B cell (primary cell): ENCODE measurements at regions of chr22 and their contacts with region 1.

Region 1: DNA sequence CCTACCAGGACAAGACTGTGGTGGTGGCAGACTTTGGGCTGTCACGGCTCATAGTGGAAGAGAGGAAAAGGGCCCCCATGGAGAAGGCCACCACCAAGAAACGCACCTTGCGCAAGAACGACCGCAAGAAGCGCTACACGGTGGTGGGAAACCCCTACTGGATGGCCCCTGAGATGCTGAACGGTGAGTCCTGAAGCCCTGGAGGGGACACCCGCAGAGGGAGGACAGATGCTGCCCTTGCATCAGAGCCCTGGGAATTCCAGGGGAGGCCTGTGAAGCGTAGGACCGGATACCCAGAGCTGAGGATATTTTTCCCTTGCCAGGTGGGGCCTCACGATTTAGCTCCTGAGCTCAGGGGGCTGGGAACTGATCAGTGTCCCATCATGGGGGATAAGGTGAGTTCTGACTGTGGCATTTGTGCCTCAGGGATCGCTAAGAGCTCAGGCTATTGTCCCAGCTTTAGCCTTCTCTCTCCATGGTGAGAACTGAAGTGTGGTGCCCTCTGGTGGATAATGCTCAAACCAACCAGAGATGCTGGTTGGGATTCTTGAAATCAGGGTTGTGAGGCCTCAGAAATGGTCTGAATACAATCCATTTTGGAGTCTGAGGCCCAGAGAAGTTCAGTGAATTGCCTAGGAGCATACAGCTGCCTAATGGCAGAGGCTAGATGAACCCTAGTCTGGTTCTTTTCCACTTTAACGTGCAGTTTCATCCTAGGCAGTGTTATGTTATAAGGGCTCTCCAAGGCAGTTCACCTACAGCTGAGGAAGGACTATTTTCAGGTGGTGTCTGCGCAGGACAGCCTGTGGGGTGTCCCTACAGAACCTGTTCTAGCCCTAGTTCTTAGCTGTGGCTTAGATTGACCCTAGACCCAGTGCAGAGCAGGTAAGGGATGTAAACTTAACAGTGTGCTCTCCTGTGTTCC is 19.5 kb downstream of the PIK3IP1 start:
- DNase-seq: peak; percentile 67
- ATAC-seq: peak; percentile 49
- H3K4me3 ChIP-seq: no peak overlapping the region
- H3K4me3 Mint-ChIP-seq: no peak overlapping the region
- H3K27ac ChIP-seq: no peak overlapping the region
- H3K27ac Mint-ChIP-seq: no peak overlapping the region
- H3K4me1 ChIP-seq: peaks cover 0 to 3% of the 10 kb centered on the region in 2 donors
- H3K4me1 Mint-ChIP-seq: no peaks in the 10 kb centered on the region
- H3K27me3 ChIP-seq: no peaks in the 10 kb centered on the region
- H3K27me3 Mint-ChIP-seq: no peaks in the 10 kb centered on the region
- CTCF ChIP-seq: peak; percentile 72

Region 2: GRCh38 chr22:31089160-31090100 is 183.4 kb before region 1 on chr22:
- CTCF ChIA-PET with region 1: interaction called, 7 read pairs
- POLR2A ChIA-PET with region 1: no interaction called
- intact Hi-C with region 1: loop called (anchors 1 kb)
- DNase-seq: peak; percentile 63
- ATAC-seq: peak; percentile 35
- H3K4me3 ChIP-seq: no peak overlapping the region
- H3K4me3 Mint-ChIP-seq: peak overlapping the region; percentile 60
- H3K27ac ChIP-seq: peak overlapping the region; percentile 29 to 36
- H3K27ac Mint-ChIP-seq: peak overlapping the region; percentile 77
- H3K4me1 ChIP-seq: peaks cover 14 to 39% of the 10 kb centered on the region in 2 donors
- H3K4me1 Mint-ChIP-seq: peaks cover 16% of the 10 kb centered on the region
- H3K27me3 ChIP-seq: no peaks in the 10 kb centered on the region
- H3K27me3 Mint-ChIP-seq: no peaks in the 10 kb centered on the region
- CTCF ChIP-seq: peak; percentile 67

Region 3: GRCh38 chr22:31223786-31224191 is 49.0 kb before region 1 on chr22:
- CTCF ChIA-PET with region 1: interaction called, 10 read pairs
- POLR2A ChIA-PET with region 1: no interaction called
- intact Hi-C with region 1: no loop called
- DNase-seq: no peak
- ATAC-seq: no peak
- H3K4me3 ChIP-seq: no peak overlapping the region
- H3K4me3 Mint-ChIP-seq: no peak overlapping the region
- H3K27ac ChIP-seq: no peak overlapping the region
- H3K27ac Mint-ChIP-seq: no peak overlapping the region
- H3K4me1 ChIP-seq: peaks cover 13 to 34% of the 10 kb centered on the region in 2 donors
- H3K4me1 Mint-ChIP-seq: peaks cover 31% of the 10 kb centered on the region
- H3K27me3 ChIP-seq: no peaks in the 10 kb centered on the region
- H3K27me3 Mint-ChIP-seq: no peaks in the 10 kb centered on the region
- CTCF ChIP-seq: no peak

Region 4: GRCh38 chr22:31253949-31254348 is 18.8 kb before region 1 on chr22:
- CTCF ChIA-PET with region 1: interaction called, 22 read pairs
- POLR2A ChIA-PET with region 1: no interaction called
- intact Hi-C with region 1: no loop called
- DNase-seq: no peak
- ATAC-seq: no peak
- H3K4me3 ChIP-seq: no peak overlapping the region
- H3K4me3 Mint-ChIP-seq: no peak overlapping the region
- H3K27ac ChIP-seq: no peak overlapping the region
- H3K27ac Mint-ChIP-seq: no peak overlapping the region
- H3K4me1 ChIP-seq: peaks cover 0 to 9% of the 10 kb centered on the region in 2 donors
- H3K4me1 Mint-ChIP-seq: peaks cover 15% of the 10 kb centered on the region
- H3K27me3 ChIP-seq: no peaks in the 10 kb centered on the region
- H3K27me3 Mint-ChIP-seq: no peaks in the 10 kb centered on the region
- CTCF ChIP-seq: no peak

Region 5: DNA sequence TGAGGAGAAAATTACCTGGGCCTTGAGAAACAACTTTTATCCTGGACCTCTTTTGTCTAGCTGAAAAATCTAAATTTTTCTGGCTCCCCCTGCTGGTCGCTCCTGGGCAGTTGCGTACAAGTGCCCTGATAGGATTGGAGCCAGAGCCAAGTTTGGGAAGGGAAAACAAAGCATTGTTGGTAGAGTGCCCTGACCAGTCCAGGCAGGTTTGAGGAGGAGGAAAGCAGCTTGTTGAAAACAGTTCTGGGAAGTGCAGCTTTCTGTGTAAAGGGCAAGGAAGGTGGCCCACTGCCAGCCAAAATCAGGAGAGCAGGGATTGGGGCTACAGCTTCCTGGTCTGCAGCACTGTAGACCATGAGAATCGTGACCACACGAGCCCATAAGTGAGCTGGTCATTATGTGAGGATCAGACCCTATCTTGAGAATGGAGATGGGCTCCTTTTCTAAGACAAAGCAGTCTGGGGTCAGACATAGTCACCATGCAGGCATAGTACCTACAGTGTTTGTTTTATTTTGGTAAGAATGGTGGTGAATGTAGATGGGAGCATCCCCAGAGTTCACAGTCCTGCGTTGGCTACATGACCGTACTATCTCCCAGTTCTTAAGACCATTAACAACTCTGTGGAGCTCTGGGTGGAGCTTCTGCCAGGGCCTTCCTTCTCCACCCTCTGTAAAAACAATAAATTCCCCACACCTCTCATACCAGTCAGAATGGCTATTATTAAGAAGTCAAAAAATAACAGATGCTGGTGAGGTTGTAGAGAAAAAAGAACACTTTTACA is 40.8 kb after region 1 on chr22:
- CTCF ChIA-PET with region 1: interaction called, 41 read pairs
- POLR2A ChIA-PET with region 1: interaction called, 3 read pairs
- intact Hi-C with region 1: no loop called
- DNase-seq: peak; percentile 68
- ATAC-seq: peak; percentile 64
- H3K4me3 ChIP-seq: no peak overlapping the region
- H3K4me3 Mint-ChIP-seq: no peak overlapping the region
- H3K27ac ChIP-seq: no peak overlapping the region
- H3K27ac Mint-ChIP-seq: no peak overlapping the region
- H3K4me1 ChIP-seq: peaks cover 2 to 7% of the 10 kb centered on the region in 2 donors
- H3K4me1 Mint-ChIP-seq: peaks cover 10% of the 10 kb centered on the region
- H3K27me3 ChIP-seq: no peaks in the 10 kb centered on the region
- H3K27me3 Mint-ChIP-seq: no peaks in the 10 kb centered on the region
- CTCF ChIP-seq: peak; percentile 94

Region 6: DNA sequence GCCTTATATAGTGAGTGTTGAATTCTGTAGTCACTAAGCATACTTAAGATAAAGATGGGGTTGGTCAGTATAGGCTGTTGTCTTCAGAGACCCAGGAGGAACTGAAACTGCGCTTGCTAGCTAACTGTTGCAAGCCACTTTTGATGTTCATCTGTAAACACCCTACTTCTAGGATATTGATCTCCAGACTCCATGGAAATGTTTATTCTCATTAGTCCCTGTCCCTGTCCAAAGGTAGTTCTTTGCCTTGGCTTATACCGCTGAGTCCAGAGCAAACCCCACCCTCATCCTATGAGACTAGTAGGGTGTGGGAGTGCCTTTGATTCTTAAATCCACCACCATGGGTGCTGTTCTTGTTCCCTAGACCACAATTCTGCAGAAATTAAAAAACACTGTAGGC is 517.5 kb after region 1 on chr22:
- CTCF ChIA-PET with region 1: no interaction called
- POLR2A ChIA-PET with region 1: interaction called, 14 read pairs
- intact Hi-C with region 1: no loop called
- DNase-seq: peak; percentile 67
- ATAC-seq: peak; percentile 82
- H3K4me3 ChIP-seq: peak overlapping the region in 1 of 5 experiments; percentile 11
- H3K4me3 Mint-ChIP-seq: peak overlapping the region; percentile 74
- H3K27ac ChIP-seq: peak overlapping the region; percentile 8 to 64
- H3K27ac Mint-ChIP-seq: peak overlapping the region; percentile 80
- H3K4me1 ChIP-seq: peaks cover 24 to 35% of the 10 kb centered on the region in 2 donors
- H3K4me1 Mint-ChIP-seq: peaks cover 35% of the 10 kb centered on the region
- H3K27me3 ChIP-seq: no peaks in the 10 kb centered on the region
- H3K27me3 Mint-ChIP-seq: no peaks in the 10 kb centered on the region
- CTCF ChIP-seq: no peak